ENCODE measurements at regions of chr19 and their contacts with region 1.

Region 1: GRCh38 chr19:51607920-51608562 is 22.2 kb downstream of the SIGLEC5 start:
- DNase-seq: peak; percentile 94

Region 2: GRCh38 chr19:51552996-51553725 is 54.9 kb before region 1 on chr19:
- intact Hi-C with region 1: no loop called
- DNase-seq: peak; percentile 91

Region 3: GRCh38 chr19:51651216-51651846 is 43.3 kb after region 1 on chr19:
- intact Hi-C with region 1: loop called in 1 of 2 experiments (anchors 2 kb)
- DNase-seq: no peak